T-cell (primary cell): ENCODE measurements at regions of chr12 and their contacts with region 1.

Region 1: DNA sequence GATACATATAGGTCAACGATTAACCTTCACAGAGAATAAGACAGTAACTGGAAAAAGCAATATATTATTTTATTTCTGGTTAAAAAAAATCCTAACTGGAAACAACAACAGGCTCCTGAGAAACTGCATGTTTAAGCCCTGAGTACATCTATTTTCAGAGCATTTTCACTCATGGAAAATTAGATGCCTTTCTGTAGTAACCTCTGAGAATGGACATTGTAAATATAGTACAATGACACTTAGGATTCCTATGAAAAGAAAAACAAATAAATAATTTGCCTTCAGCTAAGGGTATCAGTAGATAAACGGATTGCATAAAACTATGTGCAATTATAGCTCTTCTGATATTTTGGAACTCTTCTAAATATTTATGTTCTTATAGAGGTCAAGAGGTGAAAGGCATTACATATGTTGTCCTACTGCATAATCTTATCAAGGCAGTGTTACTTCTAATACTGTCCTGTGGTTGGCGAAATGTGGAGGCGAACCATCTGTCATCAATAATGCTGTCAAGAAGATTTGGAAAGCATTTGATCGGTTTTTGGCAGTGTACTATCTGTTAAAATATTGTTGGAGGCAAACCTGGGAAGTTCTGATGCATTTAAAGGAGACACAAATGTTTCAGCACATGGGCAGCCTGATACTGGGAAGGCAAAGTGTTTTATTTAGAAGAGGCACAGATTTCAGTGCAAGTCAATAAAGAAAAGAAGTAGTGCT is 381.8 kb downstream of the BTG1 start:
- DNase-seq: no peak
- ATAC-seq: no peak
- H3K4me3 ChIP-seq: no peak overlapping the region
- H3K4me3 Mint-ChIP-seq: no peak overlapping the region
- H3K27ac ChIP-seq: no peak overlapping the region
- H3K27ac Mint-ChIP-seq: no peak overlapping the region
- H3K4me1 ChIP-seq: no peaks in the 10 kb centered on the region
- H3K4me1 Mint-ChIP-seq: no peaks in the 10 kb centered on the region
- H3K27me3 ChIP-seq: no peaks in the 10 kb centered on the region
- H3K27me3 Mint-ChIP-seq: no peaks in the 10 kb centered on the region

Region 2: DNA sequence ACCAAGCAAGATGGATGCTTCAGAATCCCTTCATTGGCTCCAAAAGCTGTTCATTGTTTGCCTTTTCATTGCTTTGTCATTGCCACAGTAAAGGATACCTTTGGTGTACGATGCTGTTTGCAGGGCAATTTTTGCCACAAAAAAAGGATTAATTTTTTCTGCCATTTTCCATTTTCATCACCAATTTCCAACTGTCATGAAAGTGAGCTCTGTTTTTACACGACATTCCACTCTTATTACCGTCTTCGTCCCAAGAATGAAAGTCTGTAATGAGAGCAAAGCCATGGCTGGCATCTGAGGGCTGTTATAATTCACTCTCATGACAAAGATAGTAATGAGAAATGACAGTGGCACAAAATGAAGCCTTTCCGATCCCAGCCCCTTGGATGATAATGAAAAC is 308.5 kb before region 1 on chr12:
- CTCF ChIA-PET with region 1: no interaction called
- POLR2A ChIA-PET with region 1: no interaction called
- DNase-seq: no peak
- ATAC-seq: no peak
- H3K4me3 ChIP-seq: no peak overlapping the region
- H3K4me3 Mint-ChIP-seq: no peak overlapping the region
- H3K27ac ChIP-seq: no peak overlapping the region
- H3K27ac Mint-ChIP-seq: no peak overlapping the region
- H3K4me1 ChIP-seq: no peaks in the 10 kb centered on the region
- H3K4me1 Mint-ChIP-seq: no peaks in the 10 kb centered on the region
- H3K27me3 ChIP-seq: no peaks in the 10 kb centered on the region
- H3K27me3 Mint-ChIP-seq: peaks cover 9 to 15% of the 10 kb centered on the region in 2 donors

Region 3: DNA sequence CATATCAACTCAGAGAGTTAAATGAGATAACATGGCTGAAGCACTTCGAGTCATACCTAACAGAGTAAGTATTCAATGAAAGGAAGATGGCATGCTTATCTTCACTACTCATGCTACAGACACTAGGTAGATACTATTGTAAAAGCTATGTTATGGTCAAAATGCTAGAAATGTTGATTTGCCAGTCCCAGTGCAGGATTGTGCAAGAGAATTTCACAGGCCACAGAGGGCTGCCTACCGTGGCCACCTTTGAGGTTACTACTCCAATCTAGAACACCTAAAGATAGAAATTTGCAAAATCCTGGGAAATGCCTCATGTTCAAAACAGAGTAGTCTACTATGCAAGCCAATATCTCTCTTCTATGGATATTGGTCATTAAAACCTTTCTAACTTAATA is 863.7 kb after region 1 on chr12:
- CTCF ChIA-PET with region 1: no interaction called
- POLR2A ChIA-PET with region 1: interaction called in 1 of 2 experiments, 12 read pairs
- DNase-seq: no peak
- ATAC-seq: no peak
- H3K4me3 ChIP-seq: no peak overlapping the region
- H3K4me3 Mint-ChIP-seq: no peak overlapping the region
- H3K27ac ChIP-seq: no peak overlapping the region
- H3K27ac Mint-ChIP-seq: no peak overlapping the region
- H3K4me1 ChIP-seq: no peaks in the 10 kb centered on the region
- H3K4me1 Mint-ChIP-seq: no peaks in the 10 kb centered on the region
- H3K27me3 ChIP-seq: no peaks in the 10 kb centered on the region
- H3K27me3 Mint-ChIP-seq: no peaks in the 10 kb centered on the region